ENCODE measurements at regions of chr10 and their contacts with region 1.

Region 1: DNA sequence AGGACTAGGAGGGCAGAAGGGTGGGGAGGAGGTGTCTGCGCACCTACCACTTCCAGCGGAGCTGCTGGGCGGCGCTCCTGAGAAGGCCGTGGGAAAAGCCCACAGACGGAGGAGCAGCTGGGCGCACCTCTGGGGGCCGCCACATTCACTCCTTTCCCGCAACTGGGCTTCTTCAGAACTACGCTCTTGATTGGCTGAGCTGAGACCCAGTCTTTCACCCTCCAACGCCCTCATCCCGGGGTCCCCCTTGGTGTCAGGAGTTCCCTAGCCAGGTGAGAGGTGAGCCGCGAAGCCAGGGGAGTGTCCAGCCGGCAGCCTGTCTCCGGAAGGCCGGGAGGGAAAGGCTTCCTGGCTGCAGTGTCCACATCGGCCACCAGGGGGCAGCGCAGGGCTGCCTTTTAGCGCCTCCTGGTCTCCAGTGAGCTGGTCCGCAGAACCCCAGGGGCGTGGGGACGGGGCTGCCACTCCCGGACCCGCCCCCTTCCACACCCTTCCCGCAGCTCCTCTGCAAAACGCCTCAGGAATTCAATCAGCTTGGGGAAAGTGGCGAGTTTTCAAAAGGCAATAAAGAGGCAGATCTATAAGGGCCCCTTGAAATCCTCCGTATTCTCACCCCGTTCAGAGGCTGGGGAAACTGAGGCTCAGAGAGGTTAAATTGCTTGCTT is 98.8 kb downstream of the CHST15 start:
- DNase-seq: no peak
- ATAC-seq: peak; percentile 91
- H3K4me3 ChIP-seq: peak overlapping the region; percentile 35; the same call in 1 of the 2 replicates
- H3K27ac ChIP-seq: no peak overlapping the region
- H3K4me1 ChIP-seq: peaks cover 3% of the 10 kb centered on the region; the same call in 1 of the 2 replicates
- H3K27me3 ChIP-seq: peaks cover 3 to 7% of the 10 kb centered on the region in 2 experiments; a peak in 3 of 4 replicates
- CTCF ChIP-seq: peak; percentile 94 to 97 (median 94)
- EP300 ChIP-seq: no peak
- POLR2A ChIP-seq: no peak
- RAD21 ChIP-seq: peak; percentile 86

Region 2: GRCh38 chr10:123970207-123970926 is 24.2 kb before region 1 on chr10:
- CTCF ChIA-PET with region 1: no interaction called
- POLR2A ChIA-PET with region 1: no interaction called
- RAD21 ChIA-PET with region 1: no interaction called
- SMC1A ChIA-PET with region 1: no interaction called
- in situ Hi-C with region 1: no loop called
- intact Hi-C with region 1: no loop called
- DNase-seq: no peak
- ATAC-seq: no peak
- H3K4me3 ChIP-seq: no peak overlapping the region
- H3K27ac ChIP-seq: no peak overlapping the region
- H3K4me1 ChIP-seq: no peaks in the 10 kb centered on the region
- H3K27me3 ChIP-seq: peaks cover 0 to 8% of the 10 kb centered on the region in 2 experiments
- CTCF ChIP-seq: no peak
- EP300 ChIP-seq: no peak
- POLR2A ChIP-seq: no peak
- RAD21 ChIP-seq: no peak

Region 3: DNA sequence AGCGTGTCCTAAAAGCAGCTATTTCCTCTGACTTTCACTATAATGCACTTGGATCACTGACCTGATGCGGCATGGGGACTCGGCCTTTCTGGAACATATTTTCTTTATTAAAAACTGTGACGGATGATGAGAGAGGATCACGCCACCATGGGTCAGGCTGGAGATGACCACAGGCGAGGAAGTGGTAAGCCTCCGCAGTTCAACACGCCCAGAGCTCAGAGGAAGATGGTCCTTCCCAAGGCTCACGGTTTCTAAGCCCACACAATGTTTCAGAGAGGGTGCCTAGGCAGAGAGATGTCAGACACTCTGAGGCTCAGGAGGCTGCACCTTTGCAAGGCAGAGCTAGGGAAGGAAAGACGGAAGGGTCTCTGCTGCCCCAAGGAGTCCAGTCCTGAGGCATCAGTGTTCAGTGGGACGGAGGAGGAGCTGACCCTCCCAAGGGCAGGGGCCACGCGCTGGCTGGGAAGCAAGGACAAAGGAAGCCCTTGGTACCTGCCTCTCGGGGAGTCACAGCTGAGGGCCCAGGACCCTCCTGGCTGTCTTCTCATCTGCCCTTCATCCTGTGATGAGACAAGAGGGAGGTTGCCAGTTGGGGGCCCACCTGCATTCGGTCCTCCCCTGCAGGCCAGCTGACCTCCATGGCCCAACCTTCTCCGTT is 89.3 kb after region 1 on chr10:
- CTCF ChIA-PET with region 1: interaction called, 5 read pairs
- POLR2A ChIA-PET with region 1: no interaction called
- RAD21 ChIA-PET with region 1: no interaction called
- SMC1A ChIA-PET with region 1: interaction called, 3 read pairs
- in situ Hi-C with region 1: no loop called
- intact Hi-C with region 1: loop called (anchors 5 kb)
- DNase-seq: no peak
- ATAC-seq: no peak
- H3K4me3 ChIP-seq: no peak overlapping the region
- H3K27ac ChIP-seq: no peak overlapping the region
- H3K4me1 ChIP-seq: no peaks in the 10 kb centered on the region
- H3K27me3 ChIP-seq: peaks cover 1 to 6% of the 10 kb centered on the region in 2 experiments; a peak in 3 of 4 replicates
- CTCF ChIP-seq: no peak
- EP300 ChIP-seq: no peak
- POLR2A ChIP-seq: no peak
- RAD21 ChIP-seq: no peak

Region 4: DNA sequence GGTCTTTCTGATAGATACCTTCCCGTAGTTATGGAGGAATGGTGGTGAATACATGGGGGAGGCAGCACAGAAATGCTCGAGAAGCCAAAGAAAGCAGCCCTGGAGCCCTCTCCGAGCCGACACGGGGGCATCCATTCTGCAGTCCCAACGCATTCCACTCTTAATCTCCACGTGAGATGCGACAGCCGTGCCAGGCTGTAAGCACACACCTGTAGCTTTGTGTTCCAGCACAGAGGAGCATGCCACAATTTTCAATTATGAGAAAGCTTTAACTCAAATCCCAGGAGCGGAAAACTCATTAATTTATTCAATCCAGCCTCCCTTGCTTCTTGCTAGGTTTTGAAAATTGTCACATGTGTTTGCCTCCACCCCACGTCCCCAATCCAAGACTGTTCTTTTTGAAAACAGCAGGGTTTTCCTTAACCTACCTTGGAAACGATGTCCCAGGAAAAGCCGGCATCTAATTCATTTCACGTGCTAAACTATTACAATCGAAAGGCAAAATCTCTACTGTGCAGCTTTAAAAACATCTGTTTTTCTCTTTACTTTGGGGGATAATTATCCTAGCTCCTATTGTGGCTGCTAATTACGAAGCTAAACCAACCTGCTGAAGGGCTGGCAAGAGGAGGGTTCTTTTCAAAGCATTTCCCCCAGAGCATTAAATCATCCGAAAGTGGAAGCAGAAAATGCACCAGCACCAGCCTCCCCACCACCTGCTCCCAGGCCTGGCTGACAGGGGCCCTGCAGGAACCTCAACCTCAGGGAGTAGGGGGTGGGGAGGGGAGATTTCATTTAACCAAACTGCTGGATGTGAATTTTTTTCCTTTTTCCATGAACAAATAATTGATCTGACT is 154.9 kb after region 1 on chr10:
- CTCF ChIA-PET with region 1: no interaction called
- POLR2A ChIA-PET with region 1: no interaction called
- RAD21 ChIA-PET with region 1: no interaction called
- SMC1A ChIA-PET with region 1: no interaction called
- in situ Hi-C with region 1: no loop called
- intact Hi-C with region 1: no loop called
- DNase-seq: peak; percentile 33
- ATAC-seq: peak; percentile 54
- H3K4me3 ChIP-seq: no peak overlapping the region
- H3K27ac ChIP-seq: no peak overlapping the region
- H3K4me1 ChIP-seq: peaks cover 28% of the 10 kb centered on the region
- H3K27me3 ChIP-seq: no peaks in the 10 kb centered on the region
- CTCF ChIP-seq: no peak
- EP300 ChIP-seq: 0 out of 4 replicates have a peak, but pooled peaks of 1 of the 2 experiments have one; percentile 47
- POLR2A ChIP-seq: no peak
- RAD21 ChIP-seq: no peak

Region 5: GRCh38 chr10:124289851-124290795 is 295.6 kb after region 1 on chr10:
- CTCF ChIA-PET with region 1: interaction called, 8 read pairs
- POLR2A ChIA-PET with region 1: interaction called, 8 read pairs
- RAD21 ChIA-PET with region 1: interaction called, 5 read pairs
- SMC1A ChIA-PET with region 1: interaction called, 5 read pairs
- in situ Hi-C with region 1: no loop called
- intact Hi-C with region 1: loop called (anchors 5 kb)
- DNase-seq: peak; percentile 80
- ATAC-seq: peak; percentile 76
- H3K4me3 ChIP-seq: no peak overlapping the region
- H3K27ac ChIP-seq: peak overlapping the region; percentile 68
- H3K4me1 ChIP-seq: peaks cover 55% of the 10 kb centered on the region
- H3K27me3 ChIP-seq: no peaks in the 10 kb centered on the region
- CTCF ChIP-seq: no peak
- EP300 ChIP-seq: peak; percentile 56 to 85
- POLR2A ChIP-seq: no peak
- RAD21 ChIP-seq: no peak

Region 6: GRCh38 chr10:124340033-124340760 is 345.6 kb after region 1 on chr10:
- CTCF ChIA-PET with region 1: no interaction called
- POLR2A ChIA-PET with region 1: no interaction called
- RAD21 ChIA-PET with region 1: no interaction called
- SMC1A ChIA-PET with region 1: no interaction called
- in situ Hi-C with region 1: no loop called
- intact Hi-C with region 1: no loop called
- DNase-seq: no peak
- ATAC-seq: no peak
- H3K4me3 ChIP-seq: no peak overlapping the region
- H3K27ac ChIP-seq: 0 out of 2 replicates have a peak overlapping the region, but pooled peaks have one; percentile 10
- H3K4me1 ChIP-seq: peaks cover 18% of the 10 kb centered on the region
- H3K27me3 ChIP-seq: no peaks in the 10 kb centered on the region
- CTCF ChIP-seq: no peak
- EP300 ChIP-seq: no peak
- POLR2A ChIP-seq: no peak
- RAD21 ChIP-seq: no peak

Region 7: DNA sequence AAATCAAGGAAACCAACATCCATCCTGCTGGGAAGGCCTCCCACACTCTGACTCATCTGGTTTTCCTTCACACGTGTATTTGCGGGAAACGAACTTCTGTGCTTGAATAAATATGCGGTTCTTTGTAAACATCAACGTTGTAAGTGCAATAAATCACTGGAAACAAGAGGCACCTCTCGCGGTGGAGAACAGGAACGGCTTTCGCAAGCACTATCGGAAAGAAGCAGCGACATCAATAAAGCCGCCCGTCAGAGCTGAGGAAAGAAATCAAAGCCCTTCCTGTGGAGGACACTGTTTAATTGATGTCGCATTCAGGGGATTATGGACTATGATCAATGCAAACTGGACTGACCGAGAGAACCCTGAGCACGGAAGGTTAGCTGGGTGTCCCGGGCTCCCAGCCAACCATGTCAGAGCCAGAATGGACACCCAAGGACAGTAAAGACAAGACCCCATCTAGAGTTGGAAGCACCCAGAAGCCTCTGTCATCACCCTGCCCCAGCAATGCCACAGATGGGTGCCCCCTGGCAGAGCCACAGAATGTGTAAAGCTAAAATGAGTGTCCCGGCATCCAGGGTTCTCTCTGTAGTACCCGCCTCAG is 386.6 kb after region 1 on chr10:
- CTCF ChIA-PET with region 1: interaction called, 12 read pairs
- POLR2A ChIA-PET with region 1: interaction called, 4 read pairs
- RAD21 ChIA-PET with region 1: interaction called, 13 read pairs
- SMC1A ChIA-PET with region 1: interaction called, 6 read pairs
- in situ Hi-C with region 1: loop called (anchors 5 kb)
- intact Hi-C with region 1: no loop called
- DNase-seq: no peak
- ATAC-seq: no peak
- H3K4me3 ChIP-seq: no peak overlapping the region
- H3K27ac ChIP-seq: no peak overlapping the region
- H3K4me1 ChIP-seq: no peaks in the 10 kb centered on the region
- H3K27me3 ChIP-seq: peaks cover 7 to 11% of the 10 kb centered on the region in 2 experiments
- CTCF ChIP-seq: no peak
- EP300 ChIP-seq: no peak
- POLR2A ChIP-seq: no peak
- RAD21 ChIP-seq: no peak

Region 8: DNA sequence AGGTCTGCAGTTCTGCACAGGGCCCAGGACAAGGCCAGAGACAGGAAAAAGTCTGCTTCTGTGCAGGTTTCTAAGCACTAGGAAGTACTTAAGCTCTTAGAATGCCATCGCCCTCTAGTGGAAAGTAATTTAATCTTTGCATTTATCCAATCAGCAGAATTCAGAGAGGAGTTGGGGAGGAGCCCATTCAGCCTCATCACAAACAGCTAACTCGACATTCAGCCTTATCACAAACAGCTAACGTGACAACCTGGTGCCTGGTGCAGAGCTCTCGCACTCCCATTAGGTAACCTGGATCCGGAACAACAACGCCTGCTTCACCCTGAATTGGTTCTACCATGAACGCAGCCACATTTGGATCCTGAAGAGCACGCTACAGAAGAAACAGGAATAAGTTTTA is 409.0 kb after region 1 on chr10:
- CTCF ChIA-PET with region 1: interaction called, 52 read pairs
- POLR2A ChIA-PET with region 1: no interaction called
- RAD21 ChIA-PET with region 1: interaction called, 12 read pairs
- SMC1A ChIA-PET with region 1: interaction called, 26 read pairs
- in situ Hi-C with region 1: no loop called
- intact Hi-C with region 1: loop called (anchors 1 kb)
- DNase-seq: peak; percentile 45
- ATAC-seq: peak; percentile 100
- H3K4me3 ChIP-seq: no peak overlapping the region
- H3K27ac ChIP-seq: no peak overlapping the region
- H3K4me1 ChIP-seq: no peaks in the 10 kb centered on the region
- H3K27me3 ChIP-seq: no peaks in the 10 kb centered on the region
- CTCF ChIP-seq: peak; percentile 56 to 76 (median 73)
- EP300 ChIP-seq: no peak
- POLR2A ChIP-seq: 0 out of 2 replicates have a peak, but pooled peaks have one; percentile 19
- RAD21 ChIP-seq: peak; percentile 72